ENCODE measurements at regions of chr12 and their contacts with region 1.

Region 1: DNA sequence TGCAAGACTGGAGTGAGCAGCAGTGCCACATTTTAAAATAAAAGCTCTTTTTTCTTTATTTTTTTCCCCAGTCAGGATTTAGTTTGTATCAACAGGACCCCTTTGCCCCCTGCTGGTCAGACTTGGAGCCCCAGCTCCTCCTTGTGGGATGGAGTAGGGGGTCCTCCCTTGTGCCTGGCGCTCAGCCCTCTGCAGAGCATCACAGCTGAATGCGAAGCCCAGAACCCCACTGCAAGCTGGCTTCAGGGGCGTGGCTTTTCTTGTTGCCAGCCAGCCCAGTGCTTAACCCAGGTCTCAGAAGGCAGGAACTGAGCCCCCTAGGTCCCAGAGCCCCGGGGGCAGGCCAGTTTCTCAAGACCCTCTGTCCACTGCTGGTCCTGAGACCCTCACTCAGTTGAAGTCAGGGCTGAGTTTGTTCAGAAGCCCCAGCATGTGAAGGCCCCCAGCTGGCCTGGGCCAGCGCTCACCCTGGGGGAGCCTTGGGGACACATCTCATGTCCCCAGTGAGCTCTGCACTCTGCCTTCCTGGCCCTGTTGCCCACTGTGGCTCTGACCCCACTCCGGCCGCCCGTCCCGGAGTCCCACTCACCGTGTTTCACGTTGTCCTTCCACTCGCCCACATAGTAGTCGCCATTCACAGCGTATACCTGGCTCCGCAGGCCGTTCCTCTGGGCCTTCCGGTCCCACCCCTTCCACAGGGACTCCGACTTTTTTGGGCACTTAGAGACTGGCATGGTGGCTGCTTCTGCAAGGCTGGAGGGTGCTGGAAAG is 519 bp downstream of the MORN3 start:
- DNase-seq: peak; percentile 24
- H3K4me3 ChIP-seq: no peak overlapping the region
- H3K27ac ChIP-seq: no peak overlapping the region
- H3K4me1 ChIP-seq: peaks cover 8% of the 10 kb centered on the region
- H3K27me3 ChIP-seq: no peaks in the 10 kb centered on the region
- CTCF ChIP-seq: peak; percentile 62 to 75
- POLR2A ChIP-seq: no peak

Region 2: GRCh38 chr12:121499929-121500793 is 168.8 kb before region 1 on chr12:
- CTCF ChIA-PET with region 1: interaction called, 23 read pairs
- POLR2A ChIA-PET with region 1: no interaction called
- dilution Hi-C with region 1: no loop called
- intact Hi-C with region 1: no loop called
- DNase-seq: peak; percentile 71
- H3K4me3 ChIP-seq: peak overlapping the region in 1 of 3 experiments; percentile 34
- H3K27ac ChIP-seq: no peak overlapping the region
- H3K4me1 ChIP-seq: peaks cover 3% of the 10 kb centered on the region
- H3K27me3 ChIP-seq: no peaks in the 10 kb centered on the region
- CTCF ChIP-seq: peak; percentile 91 to 95
- POLR2A ChIP-seq: no peak

Region 3: DNA sequence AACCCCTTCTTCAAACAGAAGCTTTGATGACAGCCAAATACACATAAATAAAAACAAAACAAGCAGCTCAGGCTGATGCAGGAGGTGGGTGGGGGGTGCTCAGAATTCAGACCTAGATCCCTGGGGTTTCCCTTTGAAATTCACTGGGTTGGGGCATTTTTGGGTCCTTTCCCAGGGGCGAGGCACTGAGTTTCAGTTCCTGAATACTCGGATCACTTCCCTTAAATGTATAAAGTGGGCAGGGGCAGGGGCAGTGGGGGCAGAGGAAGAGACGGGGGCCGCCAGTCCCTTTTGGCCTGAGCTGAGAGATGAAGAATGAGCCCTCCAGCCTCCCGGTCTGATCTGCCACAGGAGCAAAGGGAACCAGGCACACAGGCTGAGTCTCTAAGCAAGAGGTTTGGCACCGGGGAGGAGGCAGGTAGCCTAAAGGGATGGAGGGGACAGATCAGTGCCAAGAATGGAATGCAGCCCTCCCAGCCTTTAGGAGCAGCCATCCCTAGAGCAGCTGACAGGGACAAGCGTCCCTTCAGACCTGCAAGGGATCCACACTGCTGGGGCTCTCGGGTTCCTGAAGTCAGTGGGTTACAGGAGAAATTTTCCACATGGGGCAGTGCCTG is 108.4 kb before region 1 on chr12:
- CTCF ChIA-PET with region 1: interaction called, 671 read pairs
- POLR2A ChIA-PET with region 1: no interaction called
- dilution Hi-C with region 1: no loop called
- intact Hi-C with region 1: no loop called
- DNase-seq: no peak
- H3K4me3 ChIP-seq: no peak overlapping the region
- H3K27ac ChIP-seq: no peak overlapping the region
- H3K4me1 ChIP-seq: no peaks in the 10 kb centered on the region
- H3K27me3 ChIP-seq: no peaks in the 10 kb centered on the region
- CTCF ChIP-seq: no peak
- POLR2A ChIP-seq: no peak

Region 4: GRCh38 chr12:121620328-121620891 is 48.5 kb before region 1 on chr12:
- CTCF ChIA-PET with region 1: interaction called, 20 read pairs
- POLR2A ChIA-PET with region 1: no interaction called
- dilution Hi-C with region 1: no loop called
- intact Hi-C with region 1: no loop called
- DNase-seq: no peak
- H3K4me3 ChIP-seq: no peak overlapping the region
- H3K27ac ChIP-seq: no peak overlapping the region
- H3K4me1 ChIP-seq: peaks cover 4% of the 10 kb centered on the region
- H3K27me3 ChIP-seq: no peaks in the 10 kb centered on the region
- CTCF ChIP-seq: no peak
- POLR2A ChIP-seq: no peak

Region 5: GRCh38 chr12:121649819-121650353 is 19.0 kb before region 1 on chr12:
- CTCF ChIA-PET with region 1: interaction called, 21 read pairs
- POLR2A ChIA-PET with region 1: no interaction called
- dilution Hi-C with region 1: no loop called
- intact Hi-C with region 1: no loop called
- DNase-seq: no peak
- H3K4me3 ChIP-seq: no peak overlapping the region
- H3K27ac ChIP-seq: no peak overlapping the region
- H3K4me1 ChIP-seq: no peaks in the 10 kb centered on the region
- H3K27me3 ChIP-seq: no peaks in the 10 kb centered on the region
- CTCF ChIP-seq: no peak
- POLR2A ChIP-seq: no peak